AG04449 (cell line): ENCODE measurements at regions of chr1 and their contacts with region 1.

Region 1: DNA sequence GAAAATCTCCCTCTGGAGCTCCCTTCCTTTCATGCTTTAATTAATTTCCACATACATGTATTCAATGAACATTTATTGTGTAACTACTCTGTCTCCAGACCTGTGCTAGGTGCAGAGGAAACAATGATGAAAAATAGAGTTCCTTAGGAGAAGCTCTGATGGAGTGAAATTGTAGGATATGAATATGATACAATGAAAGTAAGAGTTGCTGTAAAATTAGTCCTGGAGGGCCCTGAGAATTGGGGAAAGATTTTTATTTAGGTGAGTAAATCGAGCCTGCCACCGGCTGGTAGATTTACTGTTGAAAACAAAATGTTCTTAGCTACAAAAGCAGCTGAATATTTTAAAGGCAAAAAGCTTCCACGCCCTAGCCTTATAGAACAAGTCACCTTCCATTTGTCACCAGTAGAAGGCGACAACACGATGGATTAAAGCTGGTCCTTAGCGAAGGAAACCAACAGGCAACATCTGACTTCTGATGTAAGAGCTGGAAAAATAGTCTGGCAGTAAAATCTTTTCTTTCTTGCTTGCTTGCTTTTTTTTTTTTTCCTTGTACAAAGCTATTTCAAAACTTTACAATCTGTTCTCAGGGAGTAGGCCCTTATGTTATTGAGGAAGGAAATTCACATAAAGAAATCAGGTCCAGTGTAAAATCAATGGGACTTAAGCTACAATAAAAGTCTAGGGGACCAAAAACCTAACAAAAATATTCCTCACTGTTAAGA is 82.0 kb upstream of the ROR1 start:
- DNase-seq: peak; percentile 77
- H3K4me3 ChIP-seq: no peak overlapping the region
- CTCF ChIP-seq: peak; percentile 67

Region 2: DNA sequence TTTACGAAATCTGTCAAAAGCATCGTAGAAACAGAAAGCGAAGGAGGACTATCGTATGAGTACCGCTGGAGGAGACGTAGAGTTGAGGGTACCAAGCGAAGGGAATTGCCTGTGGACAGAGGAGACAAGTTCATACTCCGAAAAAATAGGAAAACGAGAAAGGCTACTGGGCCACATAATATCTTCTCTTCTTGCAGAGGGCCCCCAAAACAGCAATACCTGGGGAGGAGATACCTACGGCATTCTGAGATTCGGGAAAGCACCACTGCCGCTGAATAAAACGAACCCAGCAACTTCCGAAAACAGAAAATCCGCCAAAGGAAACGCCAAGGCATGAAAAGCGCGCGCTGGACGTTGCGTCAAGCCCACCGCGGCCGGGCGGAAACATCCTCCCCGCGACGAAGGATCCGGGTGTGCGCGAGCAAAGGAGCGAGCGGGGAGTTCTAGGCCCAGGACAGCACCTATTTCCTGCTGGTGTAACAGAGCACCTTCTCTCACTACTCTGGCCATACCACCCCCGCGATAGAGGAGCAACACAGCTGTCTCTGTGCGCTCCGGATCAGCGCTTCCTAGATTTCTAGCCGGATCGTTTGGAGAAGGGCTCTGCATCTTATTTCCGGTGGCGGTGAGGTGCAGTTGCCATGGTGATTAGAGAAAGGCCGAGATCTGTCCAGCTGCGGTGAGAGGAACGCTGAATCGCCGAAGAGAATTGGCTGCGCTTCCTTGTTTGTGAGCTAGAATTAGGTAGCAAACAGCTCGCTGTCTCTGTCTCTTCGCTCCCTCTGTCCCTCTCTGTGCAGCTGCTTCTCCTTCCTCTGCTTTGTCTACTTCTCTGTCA is 168.8 kb before region 1 on chr1 and contains the starts of genes EFCAB7 and ITGB3BP:
- CTCF ChIA-PET with region 1: no interaction called
- POLR2A ChIA-PET with region 1: no interaction called
- DNase-seq: peak; percentile 69
- H3K4me3 ChIP-seq: peak within 1 kb of the TSS; percentile 66
- CTCF ChIP-seq: no peak

Region 3: DNA sequence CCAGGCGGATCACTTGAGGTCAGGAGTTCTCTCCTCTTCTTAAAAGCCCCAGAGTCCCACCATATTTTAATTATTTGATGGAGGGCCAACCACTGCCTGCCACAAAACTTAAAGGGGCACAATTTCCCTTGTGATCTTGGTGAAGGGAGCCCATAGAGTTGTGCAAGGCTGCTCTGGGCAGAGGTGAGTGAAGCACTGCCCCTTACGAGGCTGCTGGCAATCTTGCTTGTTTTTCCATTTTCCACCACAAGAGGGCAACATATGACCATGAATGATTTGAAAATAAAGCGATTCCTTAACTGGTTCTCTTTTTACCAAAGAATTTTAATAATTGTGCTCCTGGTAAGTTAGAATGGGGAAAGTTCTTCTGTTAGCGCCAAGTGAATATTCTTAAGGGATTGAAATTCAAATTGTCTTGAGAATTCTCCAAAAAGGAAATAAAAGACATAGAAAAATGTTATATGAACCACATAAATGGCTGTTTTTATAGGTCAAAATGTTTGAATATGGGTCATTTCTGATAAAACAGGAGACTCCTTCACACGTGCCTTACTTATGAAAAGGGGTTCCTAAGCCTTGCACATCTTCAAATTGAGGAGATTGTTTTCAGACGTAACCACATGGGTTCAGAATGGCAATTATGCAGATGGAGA is 76.0 kb before region 1 on chr1:
- CTCF ChIA-PET with region 1: interaction called, 30 read pairs
- POLR2A ChIA-PET with region 1: no interaction called
- DNase-seq: no peak
- H3K4me3 ChIP-seq: no peak overlapping the region
- CTCF ChIP-seq: peak; percentile 40

Region 4: DNA sequence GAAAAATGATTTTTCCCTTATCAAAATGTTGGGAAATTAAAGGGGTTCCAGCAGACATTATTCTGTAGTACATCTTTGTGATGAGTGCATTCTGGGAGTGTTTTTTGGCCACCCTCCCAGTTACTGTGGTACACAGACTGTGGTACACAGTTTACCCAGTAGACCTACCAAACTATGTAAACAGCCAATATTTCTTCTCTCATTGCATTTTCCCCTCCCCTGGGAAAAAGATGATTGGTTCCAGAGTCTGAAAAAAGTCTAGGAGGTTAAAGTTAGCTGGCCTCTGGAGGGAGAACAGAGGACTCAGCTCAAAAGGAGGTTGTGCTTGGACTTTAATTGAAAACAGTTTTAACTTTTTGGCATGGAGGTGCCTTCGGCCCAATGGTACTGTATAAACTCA is 56.2 kb before region 1 on chr1:
- CTCF ChIA-PET with region 1: no interaction called
- POLR2A ChIA-PET with region 1: no interaction called
- DNase-seq: no peak
- H3K4me3 ChIP-seq: no peak overlapping the region
- CTCF ChIP-seq: no peak

Region 5: DNA sequence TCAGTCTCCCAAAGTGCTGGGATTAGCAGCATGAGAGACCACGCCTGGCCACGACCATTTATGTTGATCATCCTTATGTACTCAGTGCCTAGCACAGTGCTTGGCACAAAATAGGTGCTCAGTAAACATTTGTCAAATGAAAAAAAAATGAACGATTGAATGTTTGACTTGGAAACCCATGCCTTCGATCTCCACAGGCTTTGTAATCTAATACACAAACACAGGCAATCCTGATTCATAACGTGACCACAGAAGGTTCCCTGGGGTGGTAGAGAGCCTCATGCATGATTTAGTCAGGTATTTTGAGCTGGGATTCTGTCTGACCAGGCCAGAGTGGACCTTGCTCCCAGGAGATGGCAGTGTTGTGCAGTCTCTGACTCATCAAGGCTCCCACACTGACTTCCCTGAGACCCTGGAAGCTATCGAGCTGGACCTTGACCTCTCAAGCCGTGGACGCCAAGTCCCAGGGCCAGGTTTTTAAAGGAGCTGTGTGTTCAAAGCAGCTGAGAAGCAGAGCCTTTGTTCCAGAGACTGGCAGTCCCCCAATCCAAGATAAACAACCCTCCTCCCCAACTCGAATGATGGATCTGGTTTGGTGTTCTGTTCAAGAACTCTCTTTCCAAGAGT is 17.5 kb before region 1 on chr1:
- CTCF ChIA-PET with region 1: interaction called, 47 read pairs
- POLR2A ChIA-PET with region 1: no interaction called
- DNase-seq: no peak
- H3K4me3 ChIP-seq: no peak overlapping the region
- CTCF ChIP-seq: peak; percentile 84

Region 6: GRCh38 chr1:63747445-63747844 is 55.6 kb after region 1 on chr1:
- CTCF ChIA-PET with region 1: interaction called, 11 read pairs
- POLR2A ChIA-PET with region 1: no interaction called
- DNase-seq: no peak
- H3K4me3 ChIP-seq: no peak overlapping the region
- CTCF ChIP-seq: no peak

Region 7: DNA sequence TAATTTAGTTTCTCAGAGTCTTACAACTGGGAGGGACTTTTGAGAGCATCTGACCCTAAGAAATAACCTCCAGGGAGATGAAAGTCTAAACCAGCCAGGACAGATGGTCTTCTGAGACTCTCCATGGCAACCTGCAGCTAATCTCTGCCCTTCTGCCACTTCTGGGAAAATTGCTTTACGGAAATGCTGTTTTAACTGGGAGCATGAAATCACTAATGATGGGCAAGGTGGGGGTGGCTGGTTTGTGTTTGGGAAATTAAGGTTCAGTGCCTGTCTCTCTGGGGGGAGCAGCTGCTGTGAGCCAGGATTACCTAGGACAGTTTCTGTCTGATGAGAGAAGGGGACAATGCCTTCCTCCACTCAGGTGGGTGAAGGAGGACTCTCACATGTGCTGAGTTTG is 115.2 kb after region 1 on chr1:
- CTCF ChIA-PET with region 1: no interaction called
- POLR2A ChIA-PET with region 1: no interaction called
- DNase-seq: no peak
- H3K4me3 ChIP-seq: no peak overlapping the region
- CTCF ChIP-seq: no peak

Region 8: GRCh38 chr1:63836830-63837229 is 145.0 kb after region 1 on chr1:
- CTCF ChIA-PET with region 1: no interaction called
- POLR2A ChIA-PET with region 1: no interaction called
- DNase-seq: no peak
- H3K4me3 ChIP-seq: no peak overlapping the region
- CTCF ChIP-seq: no peak

Region 9: DNA sequence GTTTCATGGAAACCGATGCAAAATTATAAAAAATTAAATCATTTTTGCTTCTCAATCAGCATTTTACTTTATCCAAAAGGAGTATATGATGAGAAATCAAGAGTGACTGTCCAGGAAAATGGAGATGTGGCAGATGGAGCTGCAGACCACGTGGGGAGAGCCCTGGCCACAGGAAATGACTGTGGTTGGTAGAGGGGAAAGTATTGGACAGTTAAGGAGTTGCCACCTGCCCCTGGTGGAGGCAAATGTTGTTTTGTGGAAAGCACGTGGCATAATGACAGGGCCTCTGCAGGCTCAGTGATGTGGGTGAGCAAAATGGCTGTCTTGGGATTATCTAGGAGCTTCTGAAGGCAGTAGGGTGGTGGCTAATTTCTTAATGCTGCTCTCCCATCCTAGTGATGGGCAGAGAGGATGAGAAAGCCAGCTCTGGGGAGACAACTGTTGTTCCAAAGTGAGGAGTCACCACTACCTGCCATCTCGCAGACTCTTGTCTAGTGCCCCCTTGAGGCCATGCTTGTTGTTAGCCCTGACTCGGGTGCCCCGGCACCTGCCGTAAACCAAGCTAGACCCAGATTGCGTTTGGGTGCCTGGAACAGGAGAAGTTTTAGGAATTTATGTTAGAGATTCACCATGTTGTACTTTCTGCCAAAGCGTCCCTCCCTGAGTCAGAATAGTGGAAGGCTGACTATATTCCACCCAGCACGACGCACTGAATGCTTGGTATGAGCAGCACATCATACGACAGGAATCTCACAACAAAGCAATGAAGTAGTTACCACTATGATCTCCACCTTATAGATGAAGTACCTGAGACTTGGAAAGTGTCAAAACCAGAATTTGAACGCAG is 225.9 kb after region 1 on chr1:
- CTCF ChIA-PET with region 1: interaction called, 23 read pairs
- POLR2A ChIA-PET with region 1: no interaction called
- DNase-seq: no peak
- H3K4me3 ChIP-seq: no peak overlapping the region
- CTCF ChIP-seq: no peak

Region 10: DNA sequence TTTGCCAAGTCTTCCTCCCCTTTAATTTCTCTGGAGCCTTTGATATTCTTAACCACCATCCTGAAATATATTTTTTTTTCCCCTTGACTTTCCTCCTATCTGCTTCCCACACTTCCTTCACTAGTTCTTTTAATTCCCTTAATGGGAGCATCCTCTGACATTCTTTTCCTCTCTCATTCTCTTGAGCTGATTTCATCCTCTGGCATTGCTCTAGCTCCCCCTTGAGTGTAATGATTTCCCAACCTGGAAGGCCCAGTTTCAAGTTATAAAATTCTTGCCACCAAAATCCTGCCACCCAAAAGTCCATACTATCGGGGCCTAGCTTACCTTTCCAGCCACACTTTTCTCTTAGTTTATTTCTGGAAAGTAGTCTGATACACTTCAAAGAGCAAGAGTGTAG is 472.1 kb after region 1 on chr1:
- CTCF ChIA-PET with region 1: interaction called, 22 read pairs
- POLR2A ChIA-PET with region 1: no interaction called
- DNase-seq: no peak
- H3K4me3 ChIP-seq: no peak overlapping the region
- CTCF ChIP-seq: peak; percentile 58

Region 11: GRCh38 chr1:64242895-64243756 is 551.3 kb after region 1 on chr1:
- CTCF ChIA-PET with region 1: interaction called, 41 read pairs
- POLR2A ChIA-PET with region 1: interaction called, 3 read pairs
- DNase-seq: no peak
- H3K4me3 ChIP-seq: no peak overlapping the region
- CTCF ChIP-seq: peak; percentile 20